Activated CD4-positive, alpha-beta T cell treated with anti-CD3 and anti-CD28 coated beads, Interleukin-2, amount 10 ng/mL, durations not matched to agents 24 days and 14 days (primary cell): ENCODE measurements at regions of chr2 and their contacts with region 1.

Region 1: GRCh38 chr2:73985308-73986084 is 786 bp downstream of the TET3 start:
- DNase-seq: peak; percentile 83
- H3K4me3 Mint-ChIP-seq: peak overlapping the region; percentile 87
- H3K27ac Mint-ChIP-seq: peak overlapping the region; percentile 88
- H3K4me1 Mint-ChIP-seq: peaks cover 73% of the 10 kb centered on the region
- H3K27me3 Mint-ChIP-seq: peaks cover 9% of the 10 kb centered on the region

Region 2: GRCh38 chr2:74002487-74003391 is 17.2 kb after region 1 on chr2:
- intact Hi-C with region 1: loop called (anchors 1 kb)
- DNase-seq: peak; percentile 95
- H3K4me3 Mint-ChIP-seq: peak overlapping the region; percentile 84
- H3K27ac Mint-ChIP-seq: peak overlapping the region; percentile 62
- H3K4me1 Mint-ChIP-seq: peaks cover 65% of the 10 kb centered on the region
- H3K27me3 Mint-ChIP-seq: no peaks in the 10 kb centered on the region

Region 3: GRCh38 chr2:74025971-74026612 is 40.6 kb after region 1 on chr2:
- intact Hi-C with region 1: loop called (anchors 5 kb)
- DNase-seq: peak; percentile 71
- H3K4me3 Mint-ChIP-seq: peak overlapping the region; percentile 60
- H3K27ac Mint-ChIP-seq: peak overlapping the region; percentile 37
- H3K4me1 Mint-ChIP-seq: peaks cover 47% of the 10 kb centered on the region
- H3K27me3 Mint-ChIP-seq: no peaks in the 10 kb centered on the region

Region 4: DNA sequence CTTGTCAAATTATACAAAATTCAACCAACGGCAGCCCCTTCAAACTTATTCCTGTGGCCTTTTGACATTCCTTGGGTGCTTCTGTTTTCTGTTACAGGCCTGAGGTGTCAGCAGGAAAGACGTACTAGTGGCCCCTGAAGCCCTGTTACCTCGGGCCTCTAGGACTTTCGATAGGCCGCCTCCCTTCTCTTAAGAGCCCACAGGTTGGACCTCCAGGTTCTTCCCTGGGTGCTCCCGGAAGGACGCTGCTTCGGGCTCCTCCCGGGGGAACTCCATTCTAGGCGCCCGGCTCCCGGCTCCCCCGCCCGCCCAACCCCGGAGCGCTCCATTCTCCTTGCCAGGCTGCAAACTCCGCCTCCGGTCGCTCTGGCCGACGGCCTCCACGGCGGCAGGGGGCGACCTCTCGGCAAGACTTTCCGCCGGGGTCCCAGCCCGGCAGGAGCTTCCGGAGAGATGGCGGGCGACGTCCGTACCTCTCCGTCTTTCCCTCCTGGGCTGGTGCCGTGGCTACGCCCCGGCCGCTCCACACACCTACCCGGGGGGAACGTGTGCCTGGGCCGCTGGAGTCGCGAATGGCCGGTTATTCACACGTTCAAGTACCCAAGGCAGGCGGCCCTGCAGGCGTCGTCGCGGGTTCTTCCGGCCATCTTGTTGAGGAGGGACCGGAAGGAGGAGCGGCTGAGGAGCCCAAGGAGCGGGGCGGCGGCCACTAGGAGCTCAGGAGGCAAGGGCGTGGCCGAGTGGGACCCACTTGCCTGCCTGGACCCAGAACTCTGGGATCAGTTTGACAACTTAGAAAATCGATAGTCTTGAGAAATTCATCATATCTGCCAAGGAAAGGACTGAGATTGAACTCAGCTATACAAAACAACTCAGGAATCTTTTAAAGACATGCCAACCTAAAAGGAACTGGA is 134.7 kb after region 1 on chr2:
- intact Hi-C with region 1: loop called (anchors 5 kb)
- DNase-seq: peak; percentile 96
- H3K4me3 Mint-ChIP-seq: peak overlapping the region; percentile 88
- H3K27ac Mint-ChIP-seq: peak overlapping the region; percentile 92
- H3K4me1 Mint-ChIP-seq: peaks cover 9% of the 10 kb centered on the region
- H3K27me3 Mint-ChIP-seq: peaks cover 7% of the 10 kb centered on the region